ENCODE measurements at regions of chr10 and their contacts with region 1.

Region 1: GRCh38 chr10:118754720-118755480 is at the start of gene CACUL1:
- DNase-seq: peak; percentile 99 to 100 (median 100)
- ATAC-seq: peak; percentile 97
- H3K4me3 ChIP-seq: peak within 1 kb of the TSS; percentile 91
- H3K4me3 Mint-ChIP-seq: peak within 1 kb of the TSS; percentile 99
- H3K27ac ChIP-seq: peak within 1 kb of the TSS; percentile 52 to 79
- H3K27ac Mint-ChIP-seq: peak within 1 kb of the TSS; percentile 94
- H3K4me1 ChIP-seq: peaks cover 30% of the 10 kb centered on the region
- H3K4me1 Mint-ChIP-seq: peaks cover 46% of the 10 kb centered on the region
- H3K27me3 ChIP-seq: no peaks in the 10 kb centered on the region
- H3K27me3 Mint-ChIP-seq: no peaks in the 10 kb centered on the region
- CTCF ChIP-seq: no peak
- total RNA-seq, gene CACUL1: 36.7 to 37.4 TPM

Region 2: DNA sequence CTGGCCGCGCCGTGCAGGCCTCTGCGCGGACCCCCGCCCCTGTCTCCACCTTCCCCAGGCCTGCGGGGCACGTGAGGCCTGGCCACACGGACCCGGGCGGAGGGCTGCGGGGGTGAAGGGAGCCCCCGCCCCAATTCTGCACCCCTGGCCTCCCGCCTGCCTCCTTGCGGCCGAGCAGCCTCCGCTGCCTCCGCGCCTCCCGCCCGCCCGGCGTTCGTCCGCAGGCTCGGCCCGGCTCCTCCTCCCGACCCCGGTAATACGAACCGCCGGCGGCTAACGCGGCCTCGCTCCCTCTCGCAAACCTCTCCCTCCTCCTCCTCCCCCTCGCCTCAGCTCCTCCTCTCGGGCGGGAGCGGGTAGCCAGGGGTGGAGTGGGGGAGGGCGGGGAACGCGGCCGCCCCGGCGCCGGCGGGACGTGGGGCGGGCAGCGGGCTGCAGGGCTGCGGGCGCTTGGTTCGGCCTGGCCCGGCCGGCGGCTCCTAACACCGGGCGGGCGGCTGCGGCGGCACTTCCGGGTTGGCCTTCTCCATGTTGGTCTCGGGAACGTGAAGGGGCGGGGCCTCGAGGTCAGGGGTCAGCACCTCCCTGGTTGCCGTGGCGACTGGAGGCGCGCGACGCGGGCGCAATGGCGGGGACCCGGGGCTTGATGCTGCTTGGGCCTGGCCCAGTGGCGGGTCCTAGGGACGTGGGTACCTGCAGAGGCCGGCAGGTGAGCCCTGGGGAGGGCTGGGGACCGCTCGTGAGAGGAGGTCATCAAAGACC is 708.3 kb before region 1 on chr10 and contains the start of gene RAB11FIP2:
- CTCF ChIA-PET with region 1: no interaction called
- POLR2A ChIA-PET with region 1: no interaction called
- intact Hi-C with region 1: loop called in 1 of 2 experiments (anchors 5 kb)
- DNase-seq: peak; percentile 91 to 98 (median 95)
- ATAC-seq: peak; percentile 93
- H3K4me3 ChIP-seq: peak within 1 kb of the TSS; percentile 79
- H3K4me3 Mint-ChIP-seq: peak within 1 kb of the TSS; percentile 94
- H3K27ac ChIP-seq: peak within 1 kb of the TSS in 1 of 2 donors; percentile 60
- H3K27ac Mint-ChIP-seq: peak within 1 kb of the TSS; percentile 79
- H3K4me1 ChIP-seq: peaks cover 13% of the 10 kb centered on the region
- H3K4me1 Mint-ChIP-seq: peaks cover 51% of the 10 kb centered on the region
- H3K27me3 ChIP-seq: no peaks in the 10 kb centered on the region
- H3K27me3 Mint-ChIP-seq: no peaks in the 10 kb centered on the region
- CTCF ChIP-seq: no peak
- total RNA-seq, gene RAB11FIP2: 35.6 to 37.7 TPM

Region 3: DNA sequence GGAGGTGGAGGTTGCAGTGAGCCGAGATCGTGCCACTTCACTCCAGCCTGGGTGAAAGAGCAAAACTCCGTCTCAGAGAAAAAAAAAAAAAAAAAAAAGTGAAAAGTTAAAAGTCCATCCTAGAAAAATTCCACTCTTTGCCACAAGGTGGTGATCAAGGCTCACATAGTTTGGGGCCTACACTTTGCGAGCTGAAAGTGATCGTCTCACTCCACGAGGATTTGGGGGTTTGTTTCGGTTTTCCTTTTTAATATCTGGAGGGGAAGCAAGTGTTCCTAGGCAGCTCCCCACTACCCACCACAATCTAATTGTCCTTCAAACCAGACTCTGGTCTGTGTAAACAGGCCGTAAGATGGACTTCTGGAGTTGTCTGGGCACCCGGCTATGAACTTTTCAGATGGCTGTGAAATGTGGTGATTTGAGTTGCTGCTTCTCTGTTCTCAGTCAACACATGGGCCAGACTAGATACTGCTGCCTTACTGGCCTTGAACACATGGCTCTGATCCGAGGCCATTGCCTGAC is 186.5 kb before region 1 on chr10:
- CTCF ChIA-PET with region 1: interaction called, 14 read pairs
- POLR2A ChIA-PET with region 1: interaction called, 6 read pairs
- intact Hi-C with region 1: no loop called
- DNase-seq: peak in 13 of 14 experiments; percentile 17 to 85 (median 45)
- ATAC-seq: peak; percentile 75
- H3K4me3 ChIP-seq: no peak overlapping the region
- H3K4me3 Mint-ChIP-seq: no peak overlapping the region
- H3K27ac ChIP-seq: no peak overlapping the region
- H3K27ac Mint-ChIP-seq: no peak overlapping the region
- H3K4me1 ChIP-seq: peaks cover 12% of the 10 kb centered on the region
- H3K4me1 Mint-ChIP-seq: peaks cover 13% of the 10 kb centered on the region
- H3K27me3 ChIP-seq: no peaks in the 10 kb centered on the region
- H3K27me3 Mint-ChIP-seq: no peaks in the 10 kb centered on the region
- CTCF ChIP-seq: peak; percentile 78

Region 4: GRCh38 chr10:118729641-118730258 is 25.1 kb before region 1 on chr10:
- CTCF ChIA-PET with region 1: interaction called, 5 read pairs
- POLR2A ChIA-PET with region 1: interaction called, 92 read pairs
- intact Hi-C with region 1: loop called in 1 of 2 experiments (anchors 2 kb)
- DNase-seq: peak in 3 of 14 experiments; percentile 59 to 70 (median 62)
- ATAC-seq: peak; percentile 72
- H3K4me3 ChIP-seq: no peak overlapping the region
- H3K4me3 Mint-ChIP-seq: peak overlapping the region; percentile 31
- H3K27ac ChIP-seq: peak overlapping the region in 1 of 2 donors; percentile 14
- H3K27ac Mint-ChIP-seq: peak overlapping the region; percentile 80
- H3K4me1 ChIP-seq: peaks cover 33% of the 10 kb centered on the region
- H3K4me1 Mint-ChIP-seq: peaks cover 74% of the 10 kb centered on the region
- H3K27me3 ChIP-seq: no peaks in the 10 kb centered on the region
- H3K27me3 Mint-ChIP-seq: no peaks in the 10 kb centered on the region
- CTCF ChIP-seq: no peak

Region 5: GRCh38 chr10:119080521-119081260 is 325.8 kb after region 1 on chr10 and contains the start of gene EIF3A:
- CTCF ChIA-PET with region 1: no interaction called
- POLR2A ChIA-PET with region 1: interaction called, 4 read pairs
- intact Hi-C with region 1: loop called in 1 of 2 experiments (anchors 10 kb)
- DNase-seq: peak; percentile 82 to 96 (median 88)
- ATAC-seq: peak; percentile 69
- H3K4me3 ChIP-seq: peak within 1 kb of the TSS; percentile 99
- H3K4me3 Mint-ChIP-seq: peak within 1 kb of the TSS; percentile 100
- H3K27ac ChIP-seq: peak within 1 kb of the TSS; percentile 92 to 96
- H3K27ac Mint-ChIP-seq: peak within 1 kb of the TSS; percentile 99
- H3K4me1 ChIP-seq: peaks cover 33% of the 10 kb centered on the region
- H3K4me1 Mint-ChIP-seq: peaks cover 64% of the 10 kb centered on the region
- H3K27me3 ChIP-seq: no peaks in the 10 kb centered on the region
- H3K27me3 Mint-ChIP-seq: no peaks in the 10 kb centered on the region
- CTCF ChIP-seq: no peak
- total RNA-seq, gene EIF3A: 129 TPM

Region 6: GRCh38 chr10:119596537-119597404 is 841.9 kb after region 1 on chr10 and contains the start of gene TIAL1:
- CTCF ChIA-PET with region 1: no interaction called
- POLR2A ChIA-PET with region 1: no interaction called
- intact Hi-C with region 1: loop called in 1 of 2 experiments (anchors 2 kb)
- DNase-seq: peak; percentile 82 to 97 (median 90)
- ATAC-seq: peak; percentile 82
- H3K4me3 ChIP-seq: peak within 1 kb of the TSS; percentile 70
- H3K4me3 Mint-ChIP-seq: peak within 1 kb of the TSS; percentile 98
- H3K27ac ChIP-seq: peak within 1 kb of the TSS; percentile 87 to 96
- H3K27ac Mint-ChIP-seq: peak within 1 kb of the TSS; percentile 95
- H3K4me1 ChIP-seq: peaks cover 22% of the 10 kb centered on the region
- H3K4me1 Mint-ChIP-seq: peaks cover 60% of the 10 kb centered on the region
- H3K27me3 ChIP-seq: no peaks in the 10 kb centered on the region
- H3K27me3 Mint-ChIP-seq: no peaks in the 10 kb centered on the region
- CTCF ChIP-seq: no peak
- total RNA-seq, gene TIAL1: 159 to 174 TPM

Measured in CD4-positive, alpha-beta T cell (primary cell).